ENCODE measurements at regions of chr9 and their contacts with region 1.

Region 1: GRCh38 chr9:99140685-99141314 is 35.9 kb downstream of the TGFBR1 start:
- DNase-seq: peak; percentile 44 to 57
- ATAC-seq: peak; percentile 90 to 93; a peak in 5 of 6 replicates
- H3K4me3 ChIP-seq: no peak overlapping the region
- H3K27ac ChIP-seq: no peak overlapping the region
- H3K4me1 ChIP-seq: no peaks in the 10 kb centered on the region
- CTCF ChIP-seq: peak; percentile 84
- EP300 ChIP-seq: no peak
- POLR2A ChIP-seq: no peak
- RAD21 ChIP-seq: peak; percentile 87 to 90

Region 2: GRCh38 chr9:98795970-98796363 is 344.8 kb before region 1 on chr9:
- CTCF ChIA-PET with region 1: no interaction called
- POLR2A ChIA-PET with region 1: no interaction called
- DNase-seq: no peak
- ATAC-seq: peak; percentile 49 to 68
- H3K4me3 ChIP-seq: peak overlapping the region; percentile 68
- H3K27ac ChIP-seq: peak overlapping the region; percentile 70 to 94
- H3K4me1 ChIP-seq: peaks cover 20% of the 10 kb centered on the region
- CTCF ChIP-seq: no peak
- EP300 ChIP-seq: no peak
- POLR2A ChIP-seq: no peak
- RAD21 ChIP-seq: no peak

Region 3: GRCh38 chr9:98807070-98807810 is 333.6 kb before region 1 on chr9 and contains the start of gene GALNT12:
- CTCF ChIA-PET with region 1: interaction called, 12 read pairs
- POLR2A ChIA-PET with region 1: no interaction called
- DNase-seq: peak; percentile 36 to 52
- ATAC-seq: peak; percentile 80 to 83
- H3K4me3 ChIP-seq: peak within 1 kb of the TSS; percentile 75
- H3K27ac ChIP-seq: peak within 1 kb of the TSS; percentile 78 to 93
- H3K4me1 ChIP-seq: peaks cover 24% of the 10 kb centered on the region
- CTCF ChIP-seq: no peak; the same call in 1 of the 3 replicates
- EP300 ChIP-seq: no peak
- POLR2A ChIP-seq: peak; percentile 94
- RAD21 ChIP-seq: no peak
- polyA plus RNA-seq, gene GALNT12: 7.3 and 7.7 TPM in 2 replicates

Region 4: GRCh38 chr9:98860871-98861293 is 279.9 kb before region 1 on chr9:
- CTCF ChIA-PET with region 1: interaction called, 35 read pairs
- POLR2A ChIA-PET with region 1: no interaction called
- DNase-seq: peak; percentile 21 to 48
- ATAC-seq: peak; percentile 73 to 79; a peak in 5 of 6 replicates
- H3K4me3 ChIP-seq: no peak overlapping the region
- H3K27ac ChIP-seq: no peak overlapping the region
- H3K4me1 ChIP-seq: peaks cover 5% of the 10 kb centered on the region; the same call in 1 of the 3 replicates
- CTCF ChIP-seq: peak; percentile 21; the same call in 2 of the 3 replicates
- EP300 ChIP-seq: no peak
- POLR2A ChIP-seq: no peak
- RAD21 ChIP-seq: peak; percentile 49 to 55

Region 5: GRCh38 chr9:98929071-98929470 is 211.7 kb before region 1 on chr9:
- CTCF ChIA-PET with region 1: no interaction called
- POLR2A ChIA-PET with region 1: no interaction called
- DNase-seq: no peak
- ATAC-seq: no peak
- H3K4me3 ChIP-seq: no peak overlapping the region
- H3K27ac ChIP-seq: no peak overlapping the region
- H3K4me1 ChIP-seq: no peaks in the 10 kb centered on the region
- CTCF ChIP-seq: no peak
- EP300 ChIP-seq: no peak
- POLR2A ChIP-seq: no peak
- RAD21 ChIP-seq: no peak

Region 6: GRCh38 chr9:98998441-98999151 is 142.2 kb before region 1 on chr9:
- CTCF ChIA-PET with region 1: interaction called, 212 read pairs
- POLR2A ChIA-PET with region 1: no interaction called
- DNase-seq: peak; percentile 60 to 81
- ATAC-seq: peak; percentile 91 to 97
- H3K4me3 ChIP-seq: no peak overlapping the region
- H3K27ac ChIP-seq: peak overlapping the region; percentile 33 to 37; a peak in 4 of 6 replicates
- H3K4me1 ChIP-seq: peaks cover 21% of the 10 kb centered on the region
- CTCF ChIP-seq: peak; percentile 71
- EP300 ChIP-seq: no peak
- POLR2A ChIP-seq: no peak
- RAD21 ChIP-seq: peak; percentile 73

Region 7: GRCh38 chr9:99104459-99105151 is 36.2 kb before region 1 on chr9 and contains the start of gene TGFBR1:
- CTCF ChIA-PET with region 1: interaction called, 11 read pairs
- POLR2A ChIA-PET with region 1: no interaction called
- DNase-seq: peak; percentile 87 to 89
- ATAC-seq: peak; percentile 86 to 90
- H3K4me3 ChIP-seq: peak within 1 kb of the TSS; percentile 83
- H3K27ac ChIP-seq: peak within 1 kb of the TSS; percentile 91 to 94
- H3K4me1 ChIP-seq: peaks cover 32% of the 10 kb centered on the region
- CTCF ChIP-seq: no peak
- EP300 ChIP-seq: no peak
- POLR2A ChIP-seq: no peak; the same call in 1 of the 2 replicates
- RAD21 ChIP-seq: no peak
- polyA plus RNA-seq, gene TGFBR1: 45.5 and 77.1 TPM in 2 replicates

Region 8: DNA sequence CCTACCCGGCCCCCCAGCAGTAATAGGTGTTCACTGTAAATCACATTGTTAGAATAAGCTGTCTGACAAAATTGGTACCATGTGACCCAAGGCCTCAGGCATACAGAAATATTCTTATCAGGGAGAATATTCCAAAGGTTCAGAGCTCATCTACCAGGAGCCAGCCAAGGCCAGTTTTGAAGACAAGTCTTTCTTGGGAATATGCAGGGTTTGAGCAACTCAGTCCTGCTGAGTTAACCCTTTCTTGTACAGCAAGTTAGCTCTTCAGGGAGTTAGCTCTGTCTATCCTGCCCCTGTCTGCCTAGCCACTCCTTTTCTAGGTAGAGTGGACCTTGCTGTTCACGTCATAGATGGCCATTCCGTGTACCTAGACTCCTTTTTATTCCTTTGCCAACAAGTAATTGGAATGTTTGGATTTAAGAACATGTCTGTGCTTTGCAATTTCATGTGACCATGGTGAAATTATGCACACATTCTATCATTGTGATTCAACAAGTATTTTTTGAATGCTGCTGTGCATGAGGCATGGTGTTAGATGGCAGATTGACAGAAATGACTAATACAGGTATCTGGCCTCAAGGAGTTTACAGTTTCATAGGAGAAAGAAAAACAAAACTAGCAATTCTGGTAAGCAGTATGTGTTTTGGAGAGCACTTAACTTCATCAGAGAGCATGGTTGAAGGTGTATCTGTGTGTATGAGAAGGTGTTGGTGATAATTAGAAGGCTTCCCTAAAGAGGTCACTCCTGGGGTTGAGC is 13.2 kb before region 1 on chr9:
- CTCF ChIA-PET with region 1: interaction called, 14 read pairs
- POLR2A ChIA-PET with region 1: no interaction called
- DNase-seq: no peak
- ATAC-seq: peak in 1 of 2 experiments; percentile 34; a peak in 1 of 6 replicates
- H3K4me3 ChIP-seq: no peak overlapping the region
- H3K27ac ChIP-seq: no peak overlapping the region
- H3K4me1 ChIP-seq: peaks cover 3% of the 10 kb centered on the region; the same call in 2 of the 3 replicates
- CTCF ChIP-seq: no peak
- EP300 ChIP-seq: no peak
- POLR2A ChIP-seq: no peak
- RAD21 ChIP-seq: no peak

Region 9: DNA sequence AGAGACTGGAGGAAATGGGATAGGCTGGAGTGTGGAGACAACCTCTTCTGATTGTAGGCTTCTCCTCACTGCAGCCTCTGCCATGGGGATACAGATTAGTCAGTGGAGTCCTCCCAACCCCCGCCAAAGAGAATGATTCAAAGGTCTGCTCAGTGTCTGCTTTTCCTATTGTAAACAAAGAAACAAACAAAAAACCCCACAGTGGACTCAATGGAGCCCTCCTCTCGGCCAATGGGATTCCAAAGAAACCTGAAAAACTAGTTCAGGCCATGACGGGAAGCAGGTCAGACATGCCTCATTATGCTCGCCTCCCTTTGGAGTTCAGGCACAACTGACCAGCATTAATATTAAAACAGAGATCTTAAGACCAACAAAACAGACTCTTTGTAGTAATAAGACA is 167.1 kb after region 1 on chr9:
- CTCF ChIA-PET with region 1: no interaction called
- POLR2A ChIA-PET with region 1: no interaction called
- DNase-seq: no peak
- ATAC-seq: no peak
- H3K4me3 ChIP-seq: no peak overlapping the region
- H3K27ac ChIP-seq: no peak overlapping the region
- H3K4me1 ChIP-seq: no peaks in the 10 kb centered on the region
- CTCF ChIP-seq: no peak
- EP300 ChIP-seq: no peak
- POLR2A ChIP-seq: no peak
- RAD21 ChIP-seq: no peak

Measured in A549 (cell line).